ENCODE measurements at regions of chr22 and their contacts with region 1.

Region 1: GRCh38 chr22:28442264-28442710 is 237.4 kb downstream of the TTC28 start:
- DNase-seq: peak; percentile 77 to 83
- ATAC-seq: peak; percentile 89 to 97 (median 94)
- H3K4me3 ChIP-seq: peak overlapping the region; percentile 38 to 79 (median 66)
- H3K27ac ChIP-seq: peak overlapping the region; percentile 74 to 91 (median 83)
- H3K4me1 ChIP-seq: peaks cover 0 to 57% (median 30%) of the 10 kb centered on the region in 9 donors
- H3K27me3 ChIP-seq: no peaks in the 10 kb centered on the region
- CTCF ChIP-seq: peak; percentile 55 to 86 (median 76)

Region 2: DNA sequence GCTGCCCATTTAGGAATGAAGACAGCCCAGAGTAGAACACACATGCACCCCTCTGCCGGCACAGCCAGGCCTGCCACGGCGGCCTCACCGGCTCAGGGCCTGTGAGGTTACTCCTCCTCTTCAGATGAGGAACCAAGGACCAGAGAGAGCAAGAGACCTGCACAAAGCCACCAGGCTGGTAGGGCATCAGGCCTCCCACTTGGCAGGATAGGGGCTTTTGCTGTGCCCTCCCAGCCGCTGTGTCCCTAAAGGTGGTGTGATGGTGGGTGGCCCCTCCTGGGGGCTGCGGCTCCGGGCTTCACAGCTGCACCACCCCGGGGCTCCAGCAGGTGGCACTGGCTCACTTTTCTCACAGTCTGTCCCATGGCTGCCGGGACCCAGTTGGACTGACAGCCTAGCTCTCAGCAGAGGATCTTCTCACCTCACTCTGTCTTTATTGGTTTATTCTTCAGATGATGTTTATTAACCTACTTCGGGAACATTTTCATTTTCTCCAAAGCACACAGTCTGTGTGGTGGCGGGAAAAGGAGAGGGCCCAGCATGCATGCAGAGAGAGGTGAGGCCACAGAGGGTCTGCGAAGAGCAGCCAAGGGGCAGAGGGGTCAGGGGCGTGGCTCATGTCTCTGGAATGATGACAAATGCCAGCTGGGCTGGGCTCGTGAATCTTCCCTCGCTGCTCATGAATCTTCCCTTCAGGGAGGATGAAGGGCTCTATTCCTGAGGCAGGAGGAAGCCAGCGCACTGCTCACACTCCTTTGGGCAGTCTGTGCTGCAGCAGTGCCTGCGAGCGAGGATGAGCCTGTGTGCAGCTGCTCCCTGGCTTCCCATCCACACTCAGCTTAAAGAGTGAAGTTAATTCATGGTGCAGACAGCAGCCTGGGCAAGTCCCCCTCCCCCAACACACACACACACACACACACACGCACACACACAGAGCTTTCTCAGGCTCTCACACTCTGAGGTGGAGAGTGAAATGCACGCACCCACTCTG is 422.1 kb before region 1 on chr22:
- intact Hi-C with region 1: loop called in 4 of 10 experiments (anchors 10 kb)
- DNase-seq: peak; percentile 74 to 78
- ATAC-seq: peak; percentile 69 to 83 (median 74)
- H3K4me3 ChIP-seq: no peak overlapping the region
- H3K27ac ChIP-seq: peak overlapping the region in 1 of 10 donors; percentile 1
- H3K4me1 ChIP-seq: peaks cover 6 to 58% (median 23%) of the 10 kb centered on the region in 9 donors
- H3K27me3 ChIP-seq: no peaks in the 10 kb centered on the region
- CTCF ChIP-seq: peak; percentile 85 to 98 (median 96)

Region 3: DNA sequence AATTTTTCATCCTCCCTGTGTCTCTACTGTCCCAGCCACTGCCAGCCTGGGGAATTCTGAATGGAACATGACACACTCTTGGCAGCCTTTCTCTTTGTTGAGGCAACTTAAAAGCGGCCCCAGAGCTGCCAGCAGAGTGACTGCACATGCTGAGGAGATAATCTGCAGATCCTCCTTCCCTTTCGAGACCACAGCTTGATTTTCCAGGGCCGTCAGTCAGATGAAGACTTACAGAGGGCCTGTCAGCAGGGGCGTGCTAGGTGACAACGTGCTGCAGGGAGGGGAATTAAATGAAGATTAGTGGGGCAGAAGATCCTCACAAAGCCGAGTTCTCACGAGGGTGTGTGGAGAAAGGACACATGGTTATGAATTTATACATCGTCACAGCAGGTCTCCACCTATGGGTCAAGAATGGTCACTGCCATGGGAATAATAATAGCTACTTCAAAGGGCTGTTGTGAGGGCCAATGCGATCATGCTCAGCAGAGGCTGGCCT is 329.7 kb before region 1 on chr22:
- intact Hi-C with region 1: loop called in 1 of 10 experiments (anchors 5 kb)
- DNase-seq: peak; percentile 48 to 51
- ATAC-seq: peak; percentile 49 to 88 (median 74)
- H3K4me3 ChIP-seq: peak overlapping the region in 1 of 10 donors; percentile 3
- H3K27ac ChIP-seq: peak overlapping the region in 9 of 10 donors; percentile 16 to 68 (median 48)
- H3K4me1 ChIP-seq: peaks cover 0 to 34% (median 26%) of the 10 kb centered on the region in 9 donors
- H3K27me3 ChIP-seq: no peaks in the 10 kb centered on the region
- CTCF ChIP-seq: peak; percentile 6 to 57 (median 47)

Region 4: DNA sequence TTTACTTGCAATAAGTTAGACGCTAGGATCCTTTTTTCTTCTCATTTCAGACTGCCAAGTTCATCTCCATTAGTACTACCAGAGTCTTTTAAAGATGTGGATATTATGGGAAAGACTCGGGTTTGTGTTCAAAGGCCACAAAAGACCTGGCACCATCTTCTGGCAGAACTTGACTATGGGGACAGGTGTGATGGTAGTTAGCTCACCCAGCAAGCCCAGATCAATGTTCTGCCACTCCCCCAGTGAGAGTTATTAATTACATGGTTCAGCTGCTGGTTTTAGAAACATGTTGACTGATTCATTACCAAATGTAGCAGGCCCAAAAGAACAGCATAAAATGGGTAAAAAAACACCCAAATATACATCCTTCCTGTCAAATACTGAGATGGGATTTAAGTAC is 189.7 kb before region 1 on chr22:
- intact Hi-C with region 1: loop called in 3 of 10 experiments (anchors 5 to 10 kb)
- DNase-seq: no peak
- ATAC-seq: no peak
- H3K4me3 ChIP-seq: no peak overlapping the region
- H3K27ac ChIP-seq: no peak overlapping the region
- H3K4me1 ChIP-seq: peaks cover 0 to 32% (median 17%) of the 10 kb centered on the region in 9 donors
- H3K27me3 ChIP-seq: no peaks in the 10 kb centered on the region
- CTCF ChIP-seq: no peak

Region 5: DNA sequence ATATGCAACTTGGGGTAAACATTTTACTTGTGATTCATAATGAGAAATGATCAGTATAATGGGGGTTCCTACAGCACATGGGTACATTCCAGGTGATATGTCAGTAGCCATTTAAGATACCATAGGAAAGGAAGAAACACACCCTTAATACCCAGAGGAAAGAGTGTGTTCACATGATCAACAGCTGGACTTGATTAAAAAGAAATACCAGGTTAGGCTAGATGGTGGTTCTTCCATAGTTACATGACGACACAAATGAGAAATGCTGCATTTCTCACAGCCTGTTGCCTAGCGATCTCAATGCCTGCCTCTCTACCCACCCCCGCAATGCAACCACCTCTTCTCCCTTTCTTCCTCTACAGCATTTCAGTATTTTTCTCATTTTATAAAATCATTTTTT is 140.5 kb after region 1 on chr22:
- intact Hi-C with region 1: loop called in 1 of 10 experiments (anchors 10 kb)
- DNase-seq: no peak
- ATAC-seq: no peak
- H3K4me3 ChIP-seq: no peak overlapping the region
- H3K27ac ChIP-seq: no peak overlapping the region
- H3K4me1 ChIP-seq: peaks cover 0 to 14% (median 0%) of the 10 kb centered on the region in 9 donors
- H3K27me3 ChIP-seq: no peaks in the 10 kb centered on the region
- CTCF ChIP-seq: no peak